Panc1 (cell line): ENCODE measurements at regions of chr2 and their contacts with region 1.

Region 1: DNA sequence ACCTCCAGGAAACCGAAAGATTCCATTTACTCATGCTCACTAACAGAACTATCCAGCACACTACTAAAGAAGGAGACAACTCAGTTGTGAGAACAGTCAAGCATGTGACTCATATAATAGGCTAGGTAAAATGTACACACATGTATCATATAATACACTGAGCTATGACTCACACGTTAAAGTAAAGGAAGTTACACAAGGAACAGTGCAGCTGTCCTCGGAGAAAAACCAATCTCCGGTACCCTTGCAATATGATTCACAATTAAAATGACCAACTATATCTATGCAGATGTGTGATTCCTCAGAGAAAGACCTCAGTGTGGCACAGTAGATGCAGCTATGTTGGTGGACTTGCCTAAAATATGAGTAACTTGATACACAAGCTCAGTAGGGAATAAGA is 76.5 kb downstream of the STRN start:
- DNase-seq: peak; percentile 94
- ATAC-seq: peak; percentile 100
- H3K4me3 ChIP-seq: peak overlapping the region in 1 of 2 experiments; percentile 28; a peak in 1 of 4 replicates
- H3K27ac ChIP-seq: peak overlapping the region; percentile 65
- H3K4me1 ChIP-seq: peaks cover 6% of the 10 kb centered on the region; the same call in 1 of the 2 replicates
- H3K27me3 ChIP-seq: no peaks in the 10 kb centered on the region
- CTCF ChIP-seq: no peak

Region 2: GRCh38 chr2:36566887-36567286 is 322.9 kb before region 1 on chr2:
- CTCF ChIA-PET with region 1: no interaction called
- POLR2A ChIA-PET with region 1: interaction called, 15 read pairs
- in situ Hi-C with region 1: no loop called
- intact Hi-C with region 1: no loop called
- DNase-seq: no peak
- ATAC-seq: no peak
- H3K4me3 ChIP-seq: no peak overlapping the region
- H3K27ac ChIP-seq: peak overlapping the region; percentile 99
- H3K4me1 ChIP-seq: peaks cover 79% of the 10 kb centered on the region
- H3K27me3 ChIP-seq: no peaks in the 10 kb centered on the region
- CTCF ChIP-seq: no peak

Region 3: GRCh38 chr2:36854241-36854640 is 35.6 kb before region 1 on chr2:
- CTCF ChIA-PET with region 1: no interaction called
- POLR2A ChIA-PET with region 1: interaction called, 16 read pairs
- in situ Hi-C with region 1: no loop called
- intact Hi-C with region 1: no loop called
- DNase-seq: no peak
- ATAC-seq: no peak
- H3K4me3 ChIP-seq: no peak overlapping the region
- H3K27ac ChIP-seq: no peak overlapping the region
- H3K4me1 ChIP-seq: no peaks in the 10 kb centered on the region
- H3K27me3 ChIP-seq: no peaks in the 10 kb centered on the region
- CTCF ChIP-seq: no peak

Region 4: GRCh38 chr2:36993841-36994620 is 104.2 kb after region 1 on chr2:
- CTCF ChIA-PET with region 1: no interaction called
- POLR2A ChIA-PET with region 1: no interaction called
- in situ Hi-C with region 1: no loop called
- intact Hi-C with region 1: no loop called
- DNase-seq: no peak
- ATAC-seq: no peak
- H3K4me3 ChIP-seq: no peak overlapping the region
- H3K27ac ChIP-seq: no peak overlapping the region
- H3K4me1 ChIP-seq: no peaks in the 10 kb centered on the region
- H3K27me3 ChIP-seq: no peaks in the 10 kb centered on the region
- CTCF ChIP-seq: no peak